ENCODE measurements at regions of chr6 and their contacts with region 1.

Region 1: GRCh38 chr6:143575440-143575839 is 63.9 kb upstream of the FUCA2 start:
- DNase-seq: peak; percentile 69
- H3K4me3 Mint-ChIP-seq: no peak overlapping the region
- H3K27ac Mint-ChIP-seq: no peak overlapping the region
- H3K4me1 Mint-ChIP-seq: no peaks in the 10 kb centered on the region
- H3K27me3 Mint-ChIP-seq: no peaks in the 10 kb centered on the region

Region 2: DNA sequence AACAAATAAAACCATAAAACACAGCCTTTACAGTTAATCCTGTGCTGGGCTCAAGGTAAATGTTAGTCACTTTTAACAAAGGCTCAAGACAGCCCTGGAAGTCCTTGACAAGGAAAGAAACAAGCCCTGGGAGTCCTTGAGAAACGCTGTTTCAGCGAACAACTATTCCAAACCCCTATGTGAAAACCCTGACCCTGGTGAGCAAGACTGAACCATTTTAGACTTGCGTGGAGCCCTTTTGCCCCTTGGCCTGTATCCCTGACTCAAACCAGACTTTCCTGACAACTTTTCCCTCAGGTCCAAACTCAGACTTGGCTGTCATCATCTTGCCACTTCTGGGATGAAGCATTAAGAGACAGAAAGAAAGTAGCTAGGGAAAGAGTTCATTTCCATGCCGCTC is 334.3 kb before region 1 on chr6:
- CTCF ChIA-PET with region 1: no interaction called
- intact Hi-C with region 1: no loop called
- DNase-seq: no peak
- H3K4me3 Mint-ChIP-seq: no peak overlapping the region
- H3K27ac Mint-ChIP-seq: no peak overlapping the region
- H3K4me1 Mint-ChIP-seq: no peaks in the 10 kb centered on the region
- H3K27me3 Mint-ChIP-seq: no peaks in the 10 kb centered on the region

Region 3: GRCh38 chr6:143677891-143678791 is 102.7 kb after region 1 on chr6 and contains the start of gene PHACTR2:
- CTCF ChIA-PET with region 1: interaction called, 7 read pairs
- intact Hi-C with region 1: loop called (anchors 5 kb)
- DNase-seq: peak; percentile 78
- H3K4me3 Mint-ChIP-seq: peak within 1 kb of the TSS; percentile 80
- H3K27ac Mint-ChIP-seq: peak within 1 kb of the TSS; percentile 36
- H3K4me1 Mint-ChIP-seq: peaks cover 12% of the 10 kb centered on the region
- H3K27me3 Mint-ChIP-seq: peaks cover 7% of the 10 kb centered on the region
- total RNA-seq, gene PHACTR2: 10.7 to 12.2 TPM

Region 4: DNA sequence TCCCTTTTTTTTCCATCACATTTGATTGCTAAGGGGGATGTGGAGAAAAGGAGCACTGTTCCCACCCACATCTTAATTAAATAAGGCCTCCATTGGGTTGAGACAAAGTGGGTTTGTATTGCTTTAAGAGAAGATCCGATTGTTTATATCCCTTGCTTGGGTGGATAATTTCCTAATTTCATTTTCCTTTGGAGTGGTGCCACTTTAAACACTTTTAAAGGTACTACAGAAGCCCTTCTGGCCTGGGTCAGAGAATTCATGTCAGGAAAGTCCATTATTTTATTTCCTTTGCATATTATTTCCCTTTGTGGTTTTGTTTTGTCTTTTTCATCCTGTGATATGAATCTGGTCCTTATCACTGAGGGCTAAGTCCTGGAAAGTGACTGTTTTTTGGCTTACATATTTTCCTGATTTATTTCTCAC is 159.2 kb after region 1 on chr6:
- CTCF ChIA-PET with region 1: no interaction called
- intact Hi-C with region 1: loop called (anchors 5 kb)
- DNase-seq: no peak
- H3K4me3 Mint-ChIP-seq: no peak overlapping the region
- H3K27ac Mint-ChIP-seq: no peak overlapping the region
- H3K4me1 Mint-ChIP-seq: peaks cover 26% of the 10 kb centered on the region
- H3K27me3 Mint-ChIP-seq: no peaks in the 10 kb centered on the region

Region 5: DNA sequence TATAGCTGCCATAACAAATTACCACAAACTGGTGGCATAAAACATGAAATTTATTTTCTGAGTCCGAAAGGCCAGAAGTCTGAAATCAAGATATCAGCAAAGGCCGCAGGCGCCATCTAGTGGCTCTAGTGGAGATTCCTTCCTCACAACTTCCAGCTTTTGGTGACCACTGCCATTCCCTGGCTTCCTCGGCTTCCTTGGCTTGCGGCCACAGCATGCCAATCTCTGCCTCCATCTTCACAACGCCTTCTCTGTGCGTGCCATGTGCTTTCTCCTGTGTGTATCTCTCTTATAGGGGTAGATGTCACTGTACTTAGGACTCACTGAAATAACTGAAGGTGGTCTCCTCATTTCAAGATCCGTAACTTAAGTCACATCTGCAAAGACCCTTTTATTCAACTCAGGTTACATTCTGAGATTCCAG is 438.1 kb after region 1 on chr6:
- CTCF ChIA-PET with region 1: interaction called, 66 read pairs
- intact Hi-C with region 1: loop called (anchors 1 kb)
- DNase-seq: peak; percentile 78
- H3K4me3 Mint-ChIP-seq: no peak overlapping the region
- H3K27ac Mint-ChIP-seq: no peak overlapping the region
- H3K4me1 Mint-ChIP-seq: peaks cover 2% of the 10 kb centered on the region
- H3K27me3 Mint-ChIP-seq: peaks cover 10% of the 10 kb centered on the region

Region 6: GRCh38 chr6:144036064-144036834 is 460.8 kb after region 1 on chr6:
- CTCF ChIA-PET with region 1: no interaction called
- intact Hi-C with region 1: loop called (anchors 1 kb)
- DNase-seq: peak; percentile 50
- H3K4me3 Mint-ChIP-seq: peak overlapping the region; percentile 30
- H3K27ac Mint-ChIP-seq: no peak overlapping the region
- H3K4me1 Mint-ChIP-seq: peaks cover 14% of the 10 kb centered on the region
- H3K27me3 Mint-ChIP-seq: no peaks in the 10 kb centered on the region

Region 7: GRCh38 chr6:144090384-144090783 is 514.9 kb after region 1 on chr6:
- CTCF ChIA-PET with region 1: no interaction called
- intact Hi-C with region 1: loop called (anchors 1 kb)
- DNase-seq: no peak
- H3K4me3 Mint-ChIP-seq: no peak overlapping the region
- H3K27ac Mint-ChIP-seq: no peak overlapping the region
- H3K4me1 Mint-ChIP-seq: peaks cover 25% of the 10 kb centered on the region
- H3K27me3 Mint-ChIP-seq: no peaks in the 10 kb centered on the region